ENCODE measurements at regions of chr11 and their contacts with region 1.

Region 1: GRCh38 chr11:118689851-118690552 is 10.6 kb upstream of the TREH start:
- DNase-seq: no peak
- H3K4me3 ChIP-seq: peak overlapping the region; percentile 32 to 50
- H3K27ac ChIP-seq: peak overlapping the region; percentile 88
- H3K4me1 ChIP-seq: peaks cover 33% of the 10 kb centered on the region
- H3K27me3 ChIP-seq: no peaks in the 10 kb centered on the region
- CTCF ChIP-seq: peak; percentile 48 to 85 (median 62)
- POLR2A ChIP-seq: no peak

Region 2: GRCh38 chr11:118791111-118791965 is 101.3 kb after region 1 on chr11 and contains the start of gene DDX6:
- intact Hi-C with region 1: loop called (anchors 2 kb)
- DNase-seq: peak in 1 of 2 donors; percentile 90
- H3K4me3 ChIP-seq: peak within 1 kb of the TSS; percentile 79 to 92
- H3K27ac ChIP-seq: peak within 1 kb of the TSS; percentile 100
- H3K4me1 ChIP-seq: peaks cover 35% of the 10 kb centered on the region
- H3K27me3 ChIP-seq: no peaks in the 10 kb centered on the region
- CTCF ChIP-seq: peak in 2 of 3 experiments; percentile 29 to 32
- POLR2A ChIP-seq: peak; percentile 73 to 96
- total RNA-seq, gene DDX6: 81.5 TPM

Region 3: DNA sequence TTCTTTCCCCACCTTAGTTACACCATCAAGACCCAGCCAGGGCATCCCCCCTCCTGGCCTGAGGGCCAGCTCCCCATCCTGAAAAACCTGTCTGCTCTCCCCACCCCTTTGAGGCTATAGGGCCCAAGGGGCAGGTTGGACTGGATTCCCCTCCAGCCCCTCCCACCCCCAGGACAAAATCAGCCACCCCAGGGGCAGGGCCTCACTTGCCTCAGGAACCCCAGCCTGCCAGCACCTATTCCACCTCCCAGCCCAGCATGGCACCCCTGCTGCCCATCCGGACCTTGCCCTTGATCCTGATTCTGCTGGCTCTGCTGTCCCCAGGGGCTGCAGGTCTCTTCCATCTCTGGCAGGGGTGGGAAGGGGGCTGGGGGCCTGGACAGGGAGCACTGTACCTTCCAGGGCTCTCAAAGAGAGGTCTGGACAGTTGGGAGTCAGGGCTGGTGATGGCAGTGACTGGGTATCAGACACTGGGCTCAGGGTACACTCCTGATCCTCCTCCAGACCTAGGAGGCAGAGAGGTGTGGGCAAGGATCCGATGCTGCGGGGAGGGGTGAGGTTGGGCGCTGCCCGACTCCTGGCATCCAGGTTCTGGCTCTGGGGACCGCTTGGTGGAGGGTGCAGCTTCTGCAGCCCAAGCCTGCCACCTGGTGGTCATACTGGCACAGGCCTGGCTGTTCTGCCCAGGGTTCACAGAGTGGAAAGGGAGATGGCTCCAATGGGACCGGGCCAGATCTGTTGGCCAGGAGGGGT is 266.3 kb after region 1 on chr11 and contains the start of gene UPK2:
- intact Hi-C with region 1: loop called (anchors 5 kb)
- DNase-seq: no peak
- H3K4me3 ChIP-seq: no peak within 1 kb of the TSS
- H3K27ac ChIP-seq: no peak within 1 kb of the TSS
- H3K4me1 ChIP-seq: no peaks in the 10 kb centered on the region
- H3K27me3 ChIP-seq: no peaks in the 10 kb centered on the region
- CTCF ChIP-seq: peak; percentile 86 to 98 (median 98)
- POLR2A ChIP-seq: no peak
- total RNA-seq, gene UPK2: not detected

Region 4: DNA sequence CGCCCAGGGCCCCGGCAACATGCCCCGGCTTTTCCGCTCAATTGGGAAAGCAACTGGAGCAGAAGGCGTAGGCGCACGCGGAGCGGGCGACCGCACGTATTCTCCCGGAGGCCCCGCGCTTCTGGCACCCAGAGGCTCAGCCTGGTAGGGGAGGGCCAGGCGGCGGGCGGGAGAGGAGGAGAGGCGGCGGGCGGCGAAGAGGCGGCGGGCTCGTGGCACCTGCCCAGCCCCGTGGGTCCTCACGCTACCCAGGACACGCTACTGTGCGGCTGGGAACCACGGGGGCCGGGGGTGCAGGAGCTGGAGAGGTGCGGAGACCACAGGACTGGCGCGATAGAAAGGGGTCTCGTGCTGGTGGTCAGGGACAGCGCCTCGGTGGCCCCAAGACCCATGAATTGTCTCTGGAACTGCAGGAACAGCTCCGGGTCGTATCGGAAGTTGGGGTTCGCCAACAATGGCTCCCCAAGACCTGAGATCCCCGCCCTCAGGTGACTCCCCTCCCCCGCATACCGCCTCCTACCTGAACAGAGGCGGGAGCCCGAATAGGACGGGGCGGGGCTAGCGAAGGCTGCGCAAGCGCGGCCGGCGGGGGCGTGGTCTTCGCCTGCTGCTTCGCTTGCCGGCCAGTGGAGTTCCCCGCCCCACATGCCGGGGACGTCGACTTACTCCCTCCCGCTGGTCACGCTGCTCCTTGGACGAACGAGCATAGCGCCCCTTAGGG is 340.5 kb after region 1 on chr11 and contains the start of gene SLC37A4:
- intact Hi-C with region 1: no loop called
- DNase-seq: peak; percentile 98 to 99
- H3K4me3 ChIP-seq: peak within 1 kb of the TSS; percentile 74 to 92
- H3K27ac ChIP-seq: peak within 1 kb of the TSS; percentile 90
- H3K4me1 ChIP-seq: peaks cover 25% of the 10 kb centered on the region
- H3K27me3 ChIP-seq: no peaks in the 10 kb centered on the region
- CTCF ChIP-seq: peak in 2 of 3 experiments; percentile 88 to 90
- POLR2A ChIP-seq: no peak
- total RNA-seq, gene SLC37A4: 16.0 TPM

Region 5: GRCh38 chr11:119155733-119156492 is 465.9 kb after region 1 on chr11:
- intact Hi-C with region 1: no loop called
- DNase-seq: no peak
- H3K4me3 ChIP-seq: no peak overlapping the region
- H3K27ac ChIP-seq: no peak overlapping the region
- H3K4me1 ChIP-seq: no peaks in the 10 kb centered on the region
- H3K27me3 ChIP-seq: no peaks in the 10 kb centered on the region
- CTCF ChIP-seq: no peak
- POLR2A ChIP-seq: no peak

Measured in vagina (tissue), 2 donors.